BJ (cell line): ENCODE measurements at regions of chr6 and their contacts with region 1.

Region 1: DNA sequence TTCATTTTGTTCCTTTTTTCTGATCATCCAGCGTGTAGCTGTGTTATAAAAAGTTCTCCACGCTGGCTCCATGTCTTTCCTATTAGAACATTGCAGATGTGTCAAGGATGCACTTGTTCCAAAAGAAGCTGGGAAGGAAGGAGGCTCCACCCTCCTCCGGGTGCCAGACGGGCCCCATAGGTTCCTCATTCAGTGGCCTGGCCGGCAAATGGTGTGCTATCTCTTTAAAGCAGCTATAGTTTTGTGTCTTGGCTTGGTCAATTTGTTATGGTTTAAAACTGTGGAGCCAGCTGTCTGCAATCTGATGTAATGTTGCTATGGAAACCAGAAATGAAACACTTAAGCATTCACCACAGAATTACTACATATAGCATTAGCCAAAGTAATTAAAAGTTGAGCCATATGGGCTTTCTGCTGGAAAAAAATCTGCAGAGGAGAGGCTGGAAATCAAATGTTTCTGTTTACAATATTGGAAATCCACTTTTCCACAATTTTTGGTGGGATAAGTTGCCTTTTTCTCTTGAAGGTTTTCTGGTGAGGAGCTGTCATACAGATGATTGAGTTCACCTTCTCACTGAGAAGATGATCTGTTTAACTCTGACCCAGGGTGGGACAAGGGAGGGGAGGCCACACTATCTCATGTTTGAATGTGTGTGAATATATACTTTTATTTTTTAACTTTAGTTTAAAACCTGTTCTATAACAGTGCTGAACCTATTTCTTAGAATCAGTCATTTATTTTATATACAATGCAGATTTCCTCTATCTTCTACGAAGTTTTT is 167.4 kb downstream of the SASH1 start:
- DNase-seq: peak; percentile 96
- H3K4me3 ChIP-seq: peak overlapping the region; percentile 52
- H3K27me3 ChIP-seq: no peaks in the 10 kb centered on the region
- CTCF ChIP-seq: no peak

Region 2: DNA sequence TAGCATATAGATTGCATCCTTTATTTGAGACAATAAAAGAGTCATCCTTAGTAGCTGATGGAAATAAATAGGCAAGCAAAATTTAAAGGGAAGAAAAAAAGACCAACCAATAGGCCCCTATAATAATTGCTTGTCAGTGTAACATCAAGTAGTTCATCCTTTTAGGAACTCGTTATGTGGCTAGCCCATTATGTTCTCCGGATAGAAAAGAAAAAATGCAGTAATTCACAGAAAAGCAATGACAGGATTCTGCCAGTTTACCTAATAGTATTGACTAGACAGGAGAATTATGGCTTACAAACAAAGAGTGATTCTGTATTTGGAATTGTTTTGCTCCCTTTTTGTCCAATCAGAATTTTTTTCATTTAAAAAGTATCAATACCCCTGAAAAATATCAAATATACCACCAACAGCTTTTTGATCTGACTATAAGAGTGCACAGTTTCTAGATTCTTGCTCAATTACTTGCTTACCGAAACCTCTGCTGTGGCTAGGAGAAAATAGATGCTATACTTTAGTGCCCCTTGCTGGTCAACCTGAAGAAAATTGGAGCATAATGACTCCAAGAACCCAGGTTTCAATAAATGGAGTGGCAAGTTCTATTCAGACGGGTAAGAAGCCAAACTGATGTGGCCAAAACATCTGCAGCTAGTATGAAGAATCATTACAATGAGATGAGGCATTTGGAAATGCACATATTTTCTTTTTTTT is 258.9 kb before region 1 on chr6:
- CTCF ChIA-PET with region 1: no interaction called
- POLR2A ChIA-PET with region 1: interaction called, 20 read pairs
- DNase-seq: no peak
- H3K4me3 ChIP-seq: no peak overlapping the region
- H3K27me3 ChIP-seq: no peaks in the 10 kb centered on the region
- CTCF ChIP-seq: peak; percentile 53

Region 3: GRCh38 chr6:148479497-148479896 is 30.5 kb before region 1 on chr6:
- CTCF ChIA-PET with region 1: no interaction called
- POLR2A ChIA-PET with region 1: no interaction called
- DNase-seq: no peak
- H3K4me3 ChIP-seq: no peak overlapping the region
- H3K27me3 ChIP-seq: no peaks in the 10 kb centered on the region
- CTCF ChIP-seq: no peak

Region 4: GRCh38 chr6:148521158-148521557 is 11.2 kb after region 1 on chr6:
- CTCF ChIA-PET with region 1: no interaction called
- POLR2A ChIA-PET with region 1: interaction called, 14 read pairs
- DNase-seq: no peak
- H3K4me3 ChIP-seq: no peak overlapping the region
- H3K27me3 ChIP-seq: no peaks in the 10 kb centered on the region
- CTCF ChIP-seq: no peak